HepG2 (cell line): ENCODE measurements at regions of chr3 and their contacts with region 1.

Region 1: DNA sequence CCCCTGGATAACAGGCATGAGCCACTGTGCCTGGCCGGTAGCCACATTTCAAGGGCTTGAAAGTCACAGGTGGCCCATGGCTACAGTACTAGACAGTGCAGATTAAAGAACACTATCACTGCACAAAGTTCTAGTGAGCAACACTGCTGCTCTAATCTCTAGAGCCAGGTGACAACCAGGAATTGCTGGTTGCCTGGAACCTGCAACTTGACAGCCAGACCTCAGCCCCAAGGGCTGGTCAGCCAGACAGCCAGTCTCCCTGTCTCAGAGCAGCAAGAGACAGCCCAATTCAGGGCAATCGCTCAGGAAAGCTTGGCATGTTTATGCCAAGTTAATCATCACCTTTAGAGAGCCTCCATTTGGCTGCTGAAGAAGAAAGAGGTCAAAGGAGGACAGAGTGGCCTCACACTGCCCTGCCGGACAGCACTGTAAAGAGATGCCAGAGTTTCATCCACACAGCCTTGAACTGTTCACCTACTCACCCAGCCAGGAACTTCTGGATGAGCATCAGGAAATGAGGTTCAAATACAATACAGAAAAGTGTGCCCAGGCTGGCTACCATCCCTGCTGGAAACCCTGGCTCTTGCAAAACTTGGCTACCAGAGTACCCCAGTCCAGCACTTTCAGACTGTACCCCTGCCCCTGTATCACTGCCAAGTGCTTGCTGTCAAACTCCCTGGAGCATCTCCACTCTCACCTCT is 6.0 kb downstream of the CCDC12 start:
- DNase-seq: peak; percentile 96
- ATAC-seq: peak; percentile 90
- H3K4me3 ChIP-seq: peak overlapping the region in 1 of 3 experiments; percentile 57; a peak in 2 of 6 replicates
- H3K27ac ChIP-seq: peak overlapping the region; percentile 74
- H3K4me1 ChIP-seq: peaks cover 91% of the 10 kb centered on the region
- H3K27me3 ChIP-seq: no peaks in the 10 kb centered on the region
- CTCF ChIP-seq: peak; percentile 22
- EP300 ChIP-seq: peak in 1 of 2 experiments; percentile 80; a peak in 2 of 4 replicates
- POLR2A ChIP-seq: no peak
- RAD21 ChIP-seq: peak; percentile 44

Region 2: GRCh38 chr3:47035634-47036033 is 65.1 kb after region 1 on chr3:
- CTCF ChIA-PET with region 1: no interaction called
- POLR2A ChIA-PET with region 1: no interaction called
- in situ Hi-C with region 1: no loop called
- intact Hi-C with region 1: loop called (anchors 2 kb)
- DNase-seq: peak; percentile 34
- ATAC-seq: 0 out of 3 replicates have a peak, but pooled peaks have one; percentile 35
- H3K4me3 ChIP-seq: no peak overlapping the region
- H3K27ac ChIP-seq: no peak overlapping the region
- H3K4me1 ChIP-seq: peaks cover 20% of the 10 kb centered on the region
- H3K27me3 ChIP-seq: no peaks in the 10 kb centered on the region
- CTCF ChIP-seq: no peak
- EP300 ChIP-seq: no peak
- POLR2A ChIP-seq: no peak
- RAD21 ChIP-seq: no peak